Lower lobe of right lung (tissue), 2 donors: ENCODE measurements at regions of chr11 and their contacts with region 1.

Region 1: DNA sequence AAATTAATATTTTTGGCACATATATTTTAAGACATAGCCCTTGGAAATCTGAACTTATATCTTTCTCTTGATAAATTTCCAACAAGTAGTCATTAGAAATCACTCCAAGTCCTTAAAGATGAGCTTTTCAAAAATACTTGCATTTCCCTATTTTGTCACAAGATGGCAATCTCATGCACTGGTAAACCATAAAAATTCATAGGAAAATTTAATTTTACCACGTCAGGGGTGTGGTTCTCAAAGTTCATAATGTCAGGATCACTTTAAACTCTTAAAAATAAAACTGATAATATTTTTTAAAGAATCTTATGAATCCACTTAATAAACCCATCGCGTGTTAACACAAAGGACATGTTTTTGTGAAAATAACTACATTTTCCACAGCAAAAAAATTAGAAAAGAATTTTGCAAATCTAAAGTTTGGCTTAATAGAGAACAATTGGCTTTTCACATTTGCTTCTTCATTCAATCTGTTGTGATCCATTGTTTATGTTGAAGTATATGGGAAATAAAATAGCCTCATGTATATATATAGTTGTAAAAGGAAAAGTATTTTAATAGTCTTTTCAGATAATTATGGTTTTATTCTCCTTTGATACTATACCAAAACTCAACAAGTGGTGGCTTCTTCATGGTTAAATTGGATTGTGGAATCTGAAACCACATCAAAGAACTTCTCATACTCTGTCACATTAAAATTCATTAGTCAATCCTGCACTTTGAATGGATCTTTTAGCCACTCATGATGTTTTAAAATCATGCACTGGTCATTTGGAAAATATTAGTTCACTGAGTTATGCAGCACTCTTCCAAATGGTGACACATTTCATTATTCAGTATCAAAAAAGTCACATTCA is 169.1 kb downstream of the CADM1 start:
- DNase-seq: no peak
- ATAC-seq: no peak
- H3K4me3 ChIP-seq: no peak overlapping the region
- H3K27ac ChIP-seq: no peak overlapping the region
- H3K4me1 ChIP-seq: no peaks in the 10 kb centered on the region
- H3K27me3 ChIP-seq: no peaks in the 10 kb centered on the region
- CTCF ChIP-seq: peak; percentile 72

Region 2: GRCh38 chr11:115504276-115505158 is 169.4 kb after region 1 on chr11 and contains the start of gene CADM1:
- intact Hi-C with region 1: loop called (anchors 5 kb)
- DNase-seq: peak; percentile 96
- ATAC-seq: peak; percentile 95 to 97
- H3K4me3 ChIP-seq: peak within 1 kb of the TSS; percentile 63
- H3K27ac ChIP-seq: peak within 1 kb of the TSS; percentile 74
- H3K4me1 ChIP-seq: peaks cover 28% of the 10 kb centered on the region
- H3K27me3 ChIP-seq: peaks cover 11% of the 10 kb centered on the region
- CTCF ChIP-seq: peak; percentile 54
- total RNA-seq, gene CADM1: 149 TPM

Region 3: DNA sequence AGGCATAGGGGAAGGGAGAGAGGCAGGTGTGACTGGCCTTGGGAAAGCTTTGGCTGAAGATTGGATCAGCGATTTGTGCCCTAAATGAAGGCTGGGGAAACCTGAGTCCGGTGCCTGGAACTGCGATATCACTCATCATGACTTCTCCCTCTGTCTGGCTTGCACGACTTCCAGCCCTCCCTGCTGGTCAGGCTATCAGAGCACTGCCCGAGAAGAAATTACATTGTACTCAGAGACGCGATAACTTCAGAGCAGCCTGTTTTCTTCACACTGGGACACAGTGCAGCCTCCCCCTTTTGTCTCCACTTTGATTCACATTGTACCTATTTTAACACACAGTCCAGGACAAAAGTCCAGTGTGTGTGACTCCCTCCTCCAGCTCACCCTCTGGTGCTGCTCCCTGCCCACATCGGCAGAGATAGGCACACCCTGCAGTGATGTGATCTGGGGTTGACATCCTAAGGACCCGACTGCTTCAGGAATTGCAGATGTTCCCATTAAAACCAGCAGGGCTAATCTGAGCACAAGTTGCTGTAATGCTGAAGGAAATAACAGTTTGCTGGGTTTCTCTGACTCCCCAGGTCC is 231.1 kb after region 1 on chr11:
- intact Hi-C with region 1: no loop called
- DNase-seq: no peak
- ATAC-seq: no peak
- H3K4me3 ChIP-seq: no peak overlapping the region
- H3K27ac ChIP-seq: no peak overlapping the region
- H3K4me1 ChIP-seq: no peaks in the 10 kb centered on the region
- H3K27me3 ChIP-seq: no peaks in the 10 kb centered on the region
- CTCF ChIP-seq: no peak